ENCODE measurements at regions of chr5 and their contacts with region 1.

Region 1: GRCh38 chr5:159133041-159133741 is 33.5 kb upstream of the EBF1 start:
- DNase-seq: peak in 1 of 2 donors; percentile 68
- ATAC-seq: peak in 2 of 3 donors; percentile 42 to 50
- H3K4me3 ChIP-seq: no peak overlapping the region
- H3K4me3 Mint-ChIP-seq: no peak overlapping the region
- H3K27ac ChIP-seq: no peak overlapping the region
- H3K27ac Mint-ChIP-seq: no peak overlapping the region
- H3K4me1 ChIP-seq: no peaks in the 10 kb centered on the region
- H3K4me1 Mint-ChIP-seq: no peaks in the 10 kb centered on the region
- H3K27me3 ChIP-seq: no peaks in the 10 kb centered on the region
- H3K27me3 Mint-ChIP-seq: peaks cover 13 to 52% of the 10 kb centered on the region in 2 donors
- CTCF ChIP-seq: peak; percentile 93

Region 2: DNA sequence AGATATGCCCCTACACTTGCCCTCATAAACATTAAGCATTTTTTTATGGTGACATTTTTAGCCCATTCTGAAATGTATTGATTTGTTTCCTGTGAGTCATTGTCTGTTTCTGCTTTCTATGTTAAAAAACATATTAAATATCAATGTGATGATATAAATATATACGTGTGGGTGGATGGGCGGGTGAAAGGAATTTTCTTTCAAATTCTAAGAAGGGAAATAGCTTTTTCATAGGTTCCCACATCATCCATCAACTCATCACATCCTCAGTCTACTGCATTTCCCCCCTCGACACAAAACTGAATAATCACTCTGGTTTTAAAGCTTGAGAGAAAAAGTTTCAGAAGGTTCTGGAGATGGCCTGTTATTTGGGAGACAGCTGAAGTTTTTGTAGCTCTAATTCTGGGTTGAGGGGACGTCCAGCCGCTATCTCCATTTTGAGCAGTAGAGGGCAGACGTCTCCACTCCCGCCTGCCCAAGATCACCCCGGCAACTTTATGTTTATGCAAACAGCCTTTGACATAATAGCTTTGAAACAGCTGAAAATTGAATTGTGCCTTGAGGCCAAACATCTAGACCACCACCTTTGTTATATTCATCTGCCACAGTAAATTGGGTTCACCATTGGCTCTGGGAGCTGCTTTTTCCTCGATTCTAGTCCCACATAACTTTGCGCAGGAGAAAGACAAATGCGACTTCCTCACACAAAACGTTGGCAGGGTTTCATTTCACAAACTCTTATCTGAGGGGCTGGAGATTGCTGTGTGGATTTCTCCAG is 1058.0 kb before region 1 on chr5:
- intact Hi-C with region 1: loop called (anchors 2 kb)
- DNase-seq: peak; percentile 19 to 68
- ATAC-seq: peak; percentile 75 to 83 (median 75)
- H3K4me3 ChIP-seq: no peak overlapping the region
- H3K4me3 Mint-ChIP-seq: peak overlapping the region; percentile 2
- H3K27ac ChIP-seq: no peak overlapping the region
- H3K27ac Mint-ChIP-seq: no peak overlapping the region
- H3K4me1 ChIP-seq: no peaks in the 10 kb centered on the region
- H3K4me1 Mint-ChIP-seq: peaks cover 5 to 6% of the 10 kb centered on the region in 2 donors
- H3K27me3 ChIP-seq: no peaks in the 10 kb centered on the region
- H3K27me3 Mint-ChIP-seq: peaks cover 8 to 24% of the 10 kb centered on the region in 2 donors
- CTCF ChIP-seq: peak; percentile 64

Region 3: GRCh38 chr5:158174918-158175851 is 958.0 kb before region 1 on chr5:
- intact Hi-C with region 1: loop called (anchors 5 kb)
- DNase-seq: peak in 1 of 2 donors; percentile 71
- ATAC-seq: peak in 2 of 3 donors; percentile 49 to 55
- H3K4me3 ChIP-seq: no peak overlapping the region
- H3K4me3 Mint-ChIP-seq: no peak overlapping the region
- H3K27ac ChIP-seq: no peak overlapping the region
- H3K27ac Mint-ChIP-seq: no peak overlapping the region
- H3K4me1 ChIP-seq: no peaks in the 10 kb centered on the region
- H3K4me1 Mint-ChIP-seq: no peaks in the 10 kb centered on the region
- H3K27me3 ChIP-seq: no peaks in the 10 kb centered on the region
- H3K27me3 Mint-ChIP-seq: peaks cover 4 to 9% of the 10 kb centered on the region in 2 donors
- CTCF ChIP-seq: no peak

Region 4: GRCh38 chr5:158695595-158696330 is 437.4 kb before region 1 on chr5:
- intact Hi-C with region 1: loop called (anchors 1 kb)
- DNase-seq: peak; percentile 59 to 82
- ATAC-seq: peak; percentile 72 to 96 (median 83)
- H3K4me3 ChIP-seq: no peak overlapping the region
- H3K4me3 Mint-ChIP-seq: no peak overlapping the region
- H3K27ac ChIP-seq: no peak overlapping the region
- H3K27ac Mint-ChIP-seq: no peak overlapping the region
- H3K4me1 ChIP-seq: no peaks in the 10 kb centered on the region
- H3K4me1 Mint-ChIP-seq: peaks cover 0 to 4% of the 10 kb centered on the region in 2 donors
- H3K27me3 ChIP-seq: no peaks in the 10 kb centered on the region
- H3K27me3 Mint-ChIP-seq: peaks cover 7 to 16% of the 10 kb centered on the region in 2 donors
- CTCF ChIP-seq: peak; percentile 97

Region 5: DNA sequence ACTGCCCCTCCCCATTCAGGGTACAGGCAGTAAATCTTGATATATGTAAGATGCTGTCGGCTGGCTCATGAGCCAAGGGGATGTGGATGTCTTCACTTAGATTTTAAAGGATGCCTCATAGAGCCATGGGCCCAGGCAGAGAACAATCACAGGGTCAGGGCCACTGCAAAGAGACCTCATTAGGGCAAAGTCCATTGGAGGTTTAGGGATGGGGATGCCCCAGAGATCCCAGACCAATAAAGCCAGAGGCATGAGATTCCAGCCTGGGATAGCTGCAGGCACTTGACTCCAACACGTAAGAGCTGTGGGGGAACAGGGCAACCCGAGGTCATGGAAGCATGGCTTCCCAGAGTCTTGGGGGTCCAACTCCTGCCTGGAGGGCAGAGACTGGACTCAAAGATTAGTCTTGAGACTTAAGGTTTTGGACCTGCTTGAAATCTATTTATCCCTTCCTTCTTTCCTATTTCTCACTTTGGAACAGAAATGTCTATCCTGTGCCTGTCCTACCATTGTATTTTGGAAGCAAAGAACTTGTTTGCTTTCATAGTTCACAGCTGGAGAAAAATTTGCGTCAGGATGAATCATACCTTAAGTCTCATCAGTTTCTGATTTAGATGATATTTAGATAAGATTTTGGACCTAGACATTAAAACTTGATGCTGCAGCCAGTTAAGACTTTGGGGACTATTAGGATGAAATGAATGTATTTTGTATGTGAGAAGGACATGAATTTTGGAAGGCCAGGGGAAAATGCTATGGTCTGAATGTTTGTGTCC is 681.8 kb after region 1 on chr5:
- intact Hi-C with region 1: no loop called
- DNase-seq: no peak
- ATAC-seq: no peak
- H3K4me3 ChIP-seq: no peak overlapping the region
- H3K4me3 Mint-ChIP-seq: no peak overlapping the region
- H3K27ac ChIP-seq: no peak overlapping the region
- H3K27ac Mint-ChIP-seq: no peak overlapping the region
- H3K4me1 ChIP-seq: no peaks in the 10 kb centered on the region
- H3K4me1 Mint-ChIP-seq: no peaks in the 10 kb centered on the region
- H3K27me3 ChIP-seq: no peaks in the 10 kb centered on the region
- H3K27me3 Mint-ChIP-seq: peaks cover 0 to 9% of the 10 kb centered on the region in 2 donors
- CTCF ChIP-seq: no peak

Measured in natural killer cell (primary cell).